Panc1 (cell line): ENCODE measurements at regions of chr10 and their contacts with region 1.

Region 1: GRCh38 chr10:102167861-102168260 is 15.7 kb downstream of the NOLC1 start:
- DNase-seq: no peak
- ATAC-seq: no peak
- H3K4me3 ChIP-seq: no peak overlapping the region
- H3K27ac ChIP-seq: no peak overlapping the region
- H3K4me1 ChIP-seq: peaks cover 3% of the 10 kb centered on the region; the same call in 1 of the 2 replicates
- H3K27me3 ChIP-seq: no peaks in the 10 kb centered on the region
- CTCF ChIP-seq: no peak

Region 2: GRCh38 chr10:102352066-102352715 is 184.3 kb after region 1 on chr10:
- CTCF ChIA-PET with region 1: interaction called, 15 read pairs
- POLR2A ChIA-PET with region 1: no interaction called
- in situ Hi-C with region 1: no loop called
- intact Hi-C with region 1: loop called (anchors 10 kb)
- DNase-seq: peak; percentile 42
- ATAC-seq: peak; percentile 85
- H3K4me3 ChIP-seq: no peak overlapping the region
- H3K27ac ChIP-seq: no peak overlapping the region
- H3K4me1 ChIP-seq: no peaks in the 10 kb centered on the region
- H3K27me3 ChIP-seq: no peaks in the 10 kb centered on the region
- CTCF ChIP-seq: peak; percentile 99

Region 3: GRCh38 chr10:102399217-102400089 is 231.6 kb after region 1 on chr10:
- CTCF ChIA-PET with region 1: no interaction called
- POLR2A ChIA-PET with region 1: no interaction called
- in situ Hi-C with region 1: no loop called
- intact Hi-C with region 1: no loop called
- DNase-seq: no peak
- ATAC-seq: peak; percentile 65
- H3K4me3 ChIP-seq: peak overlapping the region; percentile 41 to 42
- H3K27ac ChIP-seq: peak overlapping the region; percentile 72
- H3K4me1 ChIP-seq: peaks cover 45% of the 10 kb centered on the region
- H3K27me3 ChIP-seq: no peaks in the 10 kb centered on the region
- CTCF ChIP-seq: peak; percentile 100